ENCODE measurements at regions of chr11 and their contacts with region 1.

Region 1: DNA sequence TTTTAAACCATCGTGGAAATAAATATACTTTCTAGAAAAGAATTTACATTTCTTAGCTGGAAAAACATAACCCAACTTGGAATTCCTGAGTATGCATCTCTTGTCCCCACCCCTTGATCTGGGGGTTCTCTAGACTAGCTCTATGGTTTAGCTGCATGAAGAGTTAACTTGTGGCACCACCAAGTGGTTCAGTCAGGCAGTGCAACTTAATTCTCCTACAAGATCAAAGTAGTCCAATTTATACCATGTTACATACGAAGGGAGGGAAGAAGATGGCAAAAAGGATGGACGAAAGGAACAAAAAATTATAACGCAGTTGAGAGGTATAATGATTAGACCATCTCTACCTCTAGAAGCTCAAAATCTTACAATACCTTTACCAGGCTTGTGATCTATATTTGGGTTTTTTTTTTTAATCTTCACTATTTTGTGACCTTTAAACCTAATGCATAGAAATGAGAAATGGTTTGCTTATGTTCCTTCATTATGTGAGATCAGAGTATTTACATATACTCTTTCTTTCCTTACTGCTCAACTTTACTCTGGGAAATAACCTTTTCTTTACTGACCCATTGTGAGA is 28.5 kb upstream of the ALKBH3 start:
- DNase-seq: peak; percentile 83
- ATAC-seq: peak; percentile 93
- H3K4me3 Mint-ChIP-seq: no peak overlapping the region
- H3K27ac Mint-ChIP-seq: no peak overlapping the region
- H3K4me1 Mint-ChIP-seq: peaks cover 5% of the 10 kb centered on the region
- H3K27me3 Mint-ChIP-seq: no peaks in the 10 kb centered on the region
- CTCF ChIP-seq: peak; percentile 80

Region 2: DNA sequence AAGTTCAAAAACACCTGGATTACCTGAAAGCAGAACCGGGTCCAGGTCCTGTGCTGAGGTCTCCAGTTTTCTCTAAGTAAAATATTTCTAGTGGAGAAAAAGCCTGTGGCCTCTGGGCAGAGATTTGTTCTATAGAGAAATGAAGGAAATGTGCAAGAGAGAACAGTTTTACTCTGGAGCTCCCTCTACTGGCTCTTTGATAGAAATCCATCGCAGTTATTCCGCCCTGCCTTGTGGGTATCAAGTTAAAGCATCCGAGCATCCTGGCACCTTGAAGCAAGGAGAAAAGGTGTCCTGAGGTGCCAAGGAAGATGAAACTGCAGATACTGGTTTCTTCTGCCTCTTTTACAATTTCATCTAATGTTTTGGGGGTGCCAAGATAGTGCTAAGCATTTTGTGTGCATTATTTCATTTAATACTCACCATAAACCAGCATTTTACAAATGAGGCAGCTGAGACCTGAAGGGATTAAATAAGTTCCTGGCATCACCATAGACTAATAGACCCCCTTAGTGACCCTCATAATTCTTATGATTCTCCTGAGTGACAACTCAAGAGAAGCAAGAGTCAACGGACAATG is 284.7 kb before region 1 on chr11:
- CTCF ChIA-PET with region 1: interaction called, 13 read pairs
- POLR2A ChIA-PET with region 1: no interaction called
- intact Hi-C with region 1: loop called (anchors 5 kb)
- DNase-seq: no peak
- ATAC-seq: peak; percentile 66
- H3K4me3 Mint-ChIP-seq: no peak overlapping the region
- H3K27ac Mint-ChIP-seq: no peak overlapping the region
- H3K4me1 Mint-ChIP-seq: no peaks in the 10 kb centered on the region
- H3K27me3 Mint-ChIP-seq: peaks cover 42% of the 10 kb centered on the region
- CTCF ChIP-seq: peak; percentile 76

Region 3: GRCh38 chr11:43582863-43583462 is 269.2 kb before region 1 on chr11:
- CTCF ChIA-PET with region 1: interaction called, 15 read pairs
- POLR2A ChIA-PET with region 1: no interaction called
- intact Hi-C with region 1: no loop called
- DNase-seq: no peak
- ATAC-seq: no peak
- H3K4me3 Mint-ChIP-seq: no peak overlapping the region
- H3K27ac Mint-ChIP-seq: no peak overlapping the region
- H3K4me1 Mint-ChIP-seq: peaks cover 23% of the 10 kb centered on the region
- H3K27me3 Mint-ChIP-seq: peaks cover 79% of the 10 kb centered on the region
- CTCF ChIP-seq: no peak

Region 4: GRCh38 chr11:43830928-43831440 is 21.2 kb before region 1 on chr11:
- CTCF ChIA-PET with region 1: interaction called, 39 read pairs
- POLR2A ChIA-PET with region 1: no interaction called
- intact Hi-C with region 1: no loop called
- DNase-seq: peak; percentile 76
- ATAC-seq: peak; percentile 100
- H3K4me3 Mint-ChIP-seq: no peak overlapping the region
- H3K27ac Mint-ChIP-seq: peak overlapping the region; percentile 80
- H3K4me1 Mint-ChIP-seq: peaks cover 19% of the 10 kb centered on the region
- H3K27me3 Mint-ChIP-seq: no peaks in the 10 kb centered on the region
- CTCF ChIP-seq: no peak

Region 5: GRCh38 chr11:43868852-43869567 is 16.9 kb after region 1 on chr11:
- CTCF ChIA-PET with region 1: interaction called, 13 read pairs
- POLR2A ChIA-PET with region 1: interaction called, 3 read pairs
- intact Hi-C with region 1: no loop called
- DNase-seq: peak; percentile 66
- ATAC-seq: peak; percentile 95
- H3K4me3 Mint-ChIP-seq: peak overlapping the region; percentile 31
- H3K27ac Mint-ChIP-seq: peak overlapping the region; percentile 82
- H3K4me1 Mint-ChIP-seq: peaks cover 30% of the 10 kb centered on the region
- H3K27me3 Mint-ChIP-seq: peaks cover 19% of the 10 kb centered on the region
- CTCF ChIP-seq: no peak